ENCODE measurements at regions of chr16 and their contacts with region 1.

Region 1: GRCh38 chr16:30534368-30535105 is at the start of gene ZNF747:
- DNase-seq: peak; percentile 94
- ATAC-seq: peak; percentile 86
- H3K4me3 Mint-ChIP-seq: peak within 1 kb of the TSS; percentile 82
- H3K27ac Mint-ChIP-seq: peak within 1 kb of the TSS; percentile 96
- H3K4me1 Mint-ChIP-seq: peaks cover 30% of the 10 kb centered on the region
- H3K27me3 Mint-ChIP-seq: no peaks in the 10 kb centered on the region
- total RNA-seq, gene ZNF747: 11.3 to 13.2 TPM

Region 2: DNA sequence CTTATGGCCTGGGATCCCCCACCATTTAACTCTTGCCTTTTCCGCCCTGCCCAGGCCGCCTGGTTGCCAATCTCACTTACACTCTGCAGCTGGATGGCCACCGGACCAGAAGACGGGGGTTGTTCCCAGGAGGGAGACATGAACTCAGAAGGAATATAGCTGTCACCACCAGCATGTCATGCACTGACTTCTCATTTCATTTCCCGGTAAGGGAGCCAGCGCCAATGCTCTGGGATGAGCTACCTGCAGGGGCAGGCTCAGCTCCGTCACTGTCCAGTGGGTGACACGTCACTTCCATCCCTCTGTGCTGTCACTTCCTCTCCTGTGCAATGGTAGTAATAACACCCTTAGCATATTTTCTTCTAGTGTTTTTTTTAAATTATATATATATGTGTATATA is 35.3 kb before region 1 on chr16:
- CTCF ChIA-PET with region 1: no interaction called
- DNase-seq: no peak
- ATAC-seq: no peak
- H3K4me3 Mint-ChIP-seq: no peak overlapping the region
- H3K27ac Mint-ChIP-seq: no peak overlapping the region
- H3K4me1 Mint-ChIP-seq: peaks cover 16% of the 10 kb centered on the region
- H3K27me3 Mint-ChIP-seq: no peaks in the 10 kb centered on the region

Region 3: GRCh38 chr16:30518555-30518954 is 16.0 kb before region 1 on chr16:
- CTCF ChIA-PET with region 1: no interaction called
- DNase-seq: no peak
- ATAC-seq: no peak
- H3K4me3 Mint-ChIP-seq: no peak overlapping the region
- H3K27ac Mint-ChIP-seq: peak overlapping the region; percentile 63
- H3K4me1 Mint-ChIP-seq: peaks cover 37% of the 10 kb centered on the region
- H3K27me3 Mint-ChIP-seq: no peaks in the 10 kb centered on the region

Region 4: DNA sequence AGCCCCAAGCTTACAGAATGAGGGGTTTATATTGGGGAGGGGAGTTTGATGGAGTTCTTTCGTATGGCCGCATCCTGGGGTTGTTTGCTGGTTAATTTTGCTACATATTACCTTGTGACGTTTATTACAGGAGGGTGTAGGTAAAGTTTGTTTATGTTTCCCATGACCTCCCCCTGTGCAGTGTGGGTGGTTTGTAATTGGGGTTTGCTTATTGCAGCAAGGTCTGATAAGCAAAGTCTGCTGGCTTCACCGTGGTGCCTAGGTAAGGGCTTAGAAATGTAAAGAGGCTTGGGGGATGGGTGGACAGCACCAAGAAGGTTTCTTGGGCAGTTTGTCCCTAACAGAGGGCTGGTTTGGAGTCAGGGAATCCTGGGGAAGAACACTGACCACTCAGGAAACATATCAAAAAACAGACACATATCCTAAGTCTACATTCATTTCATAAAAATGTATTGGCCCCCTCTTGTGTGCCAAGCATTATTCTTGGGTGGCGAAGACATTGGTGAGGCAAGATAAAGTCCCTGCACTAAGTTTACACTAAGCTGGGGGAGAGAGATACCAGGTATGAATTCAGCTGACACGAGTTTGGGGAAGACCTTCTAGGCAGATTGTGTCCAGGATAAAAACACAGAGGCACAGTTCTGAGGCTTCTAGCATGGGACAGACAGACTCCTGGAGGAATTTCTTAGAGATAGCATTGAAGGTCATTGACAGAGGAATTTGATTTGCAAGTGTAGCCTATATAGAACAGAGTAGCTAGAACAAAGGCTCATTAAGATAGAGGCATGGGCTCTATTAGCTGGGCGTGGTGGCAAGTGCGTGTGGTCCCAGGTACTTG is 14.1 kb after region 1 on chr16:
- CTCF ChIA-PET with region 1: interaction called, 15 read pairs
- DNase-seq: no peak
- ATAC-seq: no peak
- H3K4me3 Mint-ChIP-seq: no peak overlapping the region
- H3K27ac Mint-ChIP-seq: no peak overlapping the region
- H3K4me1 Mint-ChIP-seq: peaks cover 36% of the 10 kb centered on the region
- H3K27me3 Mint-ChIP-seq: no peaks in the 10 kb centered on the region

Region 5: DNA sequence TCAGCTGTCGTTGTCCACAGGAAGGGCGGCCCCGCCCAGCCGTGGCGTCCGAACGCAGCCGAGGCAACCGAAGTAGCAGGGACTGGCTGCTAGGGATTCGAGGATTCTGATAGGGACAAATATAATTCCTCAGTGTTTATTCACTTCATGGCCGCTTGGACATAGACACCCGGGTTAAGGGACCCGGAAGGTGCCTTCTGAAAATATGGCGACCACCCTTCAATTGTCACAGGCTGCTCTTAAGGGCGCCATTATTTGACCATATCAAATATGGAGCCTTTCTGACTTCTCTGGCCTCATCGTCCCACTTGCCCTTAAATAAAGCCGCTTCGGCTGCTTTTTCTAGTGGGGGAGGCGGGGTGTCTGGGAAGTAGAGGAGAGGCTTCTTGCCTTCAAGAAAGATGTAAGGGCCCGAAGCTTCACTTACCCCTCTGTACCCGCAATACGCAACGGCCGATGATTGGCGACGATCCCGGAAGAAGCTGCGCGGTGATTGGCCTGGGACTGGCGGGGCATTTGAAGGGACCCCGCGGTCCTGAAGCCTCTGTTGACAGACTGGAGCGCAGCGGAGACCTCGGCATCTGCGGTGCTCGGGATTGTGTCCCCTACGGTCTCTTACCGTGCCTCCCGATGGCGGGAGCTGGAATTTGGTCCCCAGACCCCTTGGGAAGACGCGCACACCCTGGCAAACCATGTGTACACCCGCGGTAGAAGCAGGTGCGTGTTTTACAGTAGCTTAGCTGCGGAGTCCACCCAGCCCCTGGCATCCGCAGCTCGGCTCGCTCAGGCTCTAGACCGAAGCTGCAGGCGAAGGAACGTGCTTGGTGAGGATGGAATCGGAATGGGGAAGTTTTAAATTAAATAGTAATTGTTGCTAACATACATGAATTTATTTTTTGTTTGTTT is 37.4 kb after region 1 on chr16 and contains the start of gene ZNF688:
- CTCF ChIA-PET with region 1: interaction called, 11 read pairs
- DNase-seq: peak; percentile 98
- ATAC-seq: peak; percentile 86
- H3K4me3 Mint-ChIP-seq: peak within 1 kb of the TSS; percentile 99
- H3K27ac Mint-ChIP-seq: peak within 1 kb of the TSS; percentile 94
- H3K4me1 Mint-ChIP-seq: peaks cover 52% of the 10 kb centered on the region
- H3K27me3 Mint-ChIP-seq: no peaks in the 10 kb centered on the region
- total RNA-seq, gene ZNF688: 14.5 to 14.7 TPM

Region 6: GRCh38 chr16:30602616-30603277 is 68.2 kb after region 1 on chr16:
- CTCF ChIA-PET with region 1: interaction called, 23 read pairs
- DNase-seq: no peak
- ATAC-seq: no peak
- H3K4me3 Mint-ChIP-seq: no peak overlapping the region
- H3K27ac Mint-ChIP-seq: no peak overlapping the region
- H3K4me1 Mint-ChIP-seq: peaks cover 12% of the 10 kb centered on the region
- H3K27me3 Mint-ChIP-seq: no peaks in the 10 kb centered on the region